Activated T-helper 1 cell treated with anti-CD3 and anti-CD28 coated beads, Interleukin-12 subunit alpha, Interleukin-12 subunit beta, Interleukin-2, Interleukin-4 antibody, amounts not matched to agents 30 ng/mL and 10 ng/mL and 1 ng/mL, durations not matched to agents 14 hours and 24 hours and 36 hours (primary cell): ENCODE measurements at regions of chr1 and their contacts with region 1.

Region 1: DNA sequence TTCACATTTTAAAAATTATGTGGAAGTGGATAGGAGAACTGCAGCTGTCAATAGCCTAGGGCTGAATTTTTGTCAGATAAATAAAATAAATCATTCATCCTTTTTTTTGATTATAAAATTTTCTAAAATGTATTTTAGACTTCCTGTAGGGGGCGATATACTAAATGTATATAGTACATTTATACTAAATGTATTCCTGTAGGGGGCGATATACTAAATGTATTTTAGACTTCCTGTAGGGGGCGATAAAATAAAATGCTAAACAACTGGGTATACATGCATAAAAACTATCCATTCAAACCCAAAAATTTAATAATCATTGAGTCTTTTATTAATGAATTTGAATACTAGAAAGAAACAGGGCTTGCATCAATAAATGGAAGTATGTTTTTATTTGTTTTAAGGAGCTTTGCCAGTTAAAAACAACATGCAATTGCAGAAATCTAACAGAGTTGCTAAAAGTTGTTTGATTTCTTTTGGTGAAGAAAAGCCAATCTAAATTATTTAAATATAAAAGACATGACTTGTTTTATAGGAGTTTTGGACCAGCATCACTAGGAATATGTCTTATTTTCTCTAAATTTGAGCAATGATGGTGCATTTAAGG is 31.4 kb downstream of the CLCA1 start:
- DNase-seq: no peak
- H3K4me3 Mint-ChIP-seq: no peak overlapping the region
- H3K27ac Mint-ChIP-seq: no peak overlapping the region
- H3K4me1 Mint-ChIP-seq: peaks cover 16% of the 10 kb centered on the region
- H3K27me3 Mint-ChIP-seq: peaks cover 38% of the 10 kb centered on the region

Region 2: GRCh38 chr1:86395771-86396497 is 104.2 kb before region 1 on chr1 and contains the start of gene ODF2L:
- intact Hi-C with region 1: loop called (anchors 1 kb)
- DNase-seq: peak; percentile 90
- H3K4me3 Mint-ChIP-seq: peak within 1 kb of the TSS; percentile 97
- H3K27ac Mint-ChIP-seq: peak within 1 kb of the TSS; percentile 96
- H3K4me1 Mint-ChIP-seq: peaks cover 54% of the 10 kb centered on the region
- H3K27me3 Mint-ChIP-seq: no peaks in the 10 kb centered on the region
- total RNA-seq, gene ODF2L: 21.0 and 22.4 TPM in 2 replicates

Region 3: GRCh38 chr1:86409416-86410021 is 90.6 kb before region 1 on chr1:
- intact Hi-C with region 1: loop called (anchors 1 kb)
- DNase-seq: no peak
- H3K4me3 Mint-ChIP-seq: no peak overlapping the region
- H3K27ac Mint-ChIP-seq: no peak overlapping the region
- H3K4me1 Mint-ChIP-seq: no peaks in the 10 kb centered on the region
- H3K27me3 Mint-ChIP-seq: peaks cover 16% of the 10 kb centered on the region

Region 4: DNA sequence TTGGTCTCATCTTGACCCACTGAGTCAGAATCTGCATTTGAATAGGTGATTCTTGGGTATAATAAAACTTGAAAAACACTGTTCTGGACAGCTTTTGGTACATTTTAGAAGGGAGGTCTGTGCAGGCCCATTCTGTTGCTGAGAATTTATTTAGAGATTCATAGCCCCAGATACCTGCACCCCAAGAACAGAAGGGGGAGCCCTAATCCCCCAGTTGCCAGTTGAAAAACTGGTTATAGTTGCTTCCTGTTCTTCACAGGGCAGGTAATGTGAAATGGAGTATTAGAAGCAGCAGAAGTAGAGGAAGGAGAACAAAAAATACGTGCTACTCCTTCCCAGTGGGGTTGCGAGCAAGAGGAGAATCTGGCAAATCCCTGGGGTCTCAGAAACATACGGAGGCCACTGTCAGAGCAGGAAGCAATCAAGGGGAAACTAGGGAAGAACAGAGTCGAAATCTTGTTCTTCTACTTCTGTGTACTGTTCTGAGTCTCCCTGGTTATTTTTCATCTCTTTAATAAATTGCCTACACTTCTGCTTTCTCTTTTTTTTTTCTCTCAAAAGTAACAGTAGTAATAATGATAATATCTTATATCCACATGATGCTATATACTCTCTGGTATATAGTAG is 80.7 kb before region 1 on chr1:
- intact Hi-C with region 1: loop called (anchors 1 kb)
- DNase-seq: peak; percentile 29
- H3K4me3 Mint-ChIP-seq: no peak overlapping the region
- H3K27ac Mint-ChIP-seq: no peak overlapping the region
- H3K4me1 Mint-ChIP-seq: peaks cover 5% of the 10 kb centered on the region
- H3K27me3 Mint-ChIP-seq: peaks cover 3% of the 10 kb centered on the region

Region 5: GRCh38 chr1:86450847-86451246 is 49.2 kb before region 1 on chr1:
- intact Hi-C with region 1: no loop called
- DNase-seq: no peak
- H3K4me3 Mint-ChIP-seq: no peak overlapping the region
- H3K27ac Mint-ChIP-seq: no peak overlapping the region
- H3K4me1 Mint-ChIP-seq: no peaks in the 10 kb centered on the region
- H3K27me3 Mint-ChIP-seq: peaks cover 23% of the 10 kb centered on the region

Region 6: GRCh38 chr1:86470859-86471258 is 29.2 kb before region 1 on chr1:
- intact Hi-C with region 1: loop called (anchors 1 kb)
- DNase-seq: no peak
- H3K4me3 Mint-ChIP-seq: no peak overlapping the region
- H3K27ac Mint-ChIP-seq: no peak overlapping the region
- H3K4me1 Mint-ChIP-seq: no peaks in the 10 kb centered on the region
- H3K27me3 Mint-ChIP-seq: peaks cover 28% of the 10 kb centered on the region

Region 7: DNA sequence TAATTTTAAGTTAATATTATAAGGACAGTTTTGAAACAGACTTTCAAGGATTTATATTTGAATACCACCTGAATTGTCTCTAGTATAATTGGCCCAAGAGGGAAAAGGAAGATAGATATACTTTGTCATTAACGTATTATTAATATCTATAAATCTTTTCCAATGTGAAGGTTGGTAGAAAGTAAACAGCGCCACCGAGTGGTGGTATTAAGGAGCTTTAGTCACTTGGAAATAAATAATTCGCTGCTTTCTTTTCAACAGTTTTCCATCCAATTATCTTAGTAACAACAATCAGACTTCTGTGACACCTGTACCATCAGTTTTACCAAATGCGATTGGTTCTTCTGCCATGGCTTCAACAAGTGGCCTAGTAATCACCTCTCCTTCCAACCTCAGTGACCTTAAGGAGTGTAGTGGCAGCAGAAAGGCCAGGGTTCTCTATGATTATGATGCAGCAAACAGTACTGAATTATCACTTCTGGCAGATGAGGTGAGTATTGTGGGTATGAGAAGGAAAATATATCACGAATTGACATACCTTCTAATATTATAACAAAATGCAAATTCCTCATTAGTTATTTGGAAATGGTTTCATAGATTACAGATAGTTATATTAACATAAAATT is 242.0 kb after region 1 on chr1:
- intact Hi-C with region 1: loop called (anchors 1 kb)
- DNase-seq: no peak
- H3K4me3 Mint-ChIP-seq: no peak overlapping the region
- H3K27ac Mint-ChIP-seq: no peak overlapping the region
- H3K4me1 Mint-ChIP-seq: no peaks in the 10 kb centered on the region
- H3K27me3 Mint-ChIP-seq: no peaks in the 10 kb centered on the region